H1 (cell line): ENCODE measurements at regions of chr5 and their contacts with region 1.

Region 1: DNA sequence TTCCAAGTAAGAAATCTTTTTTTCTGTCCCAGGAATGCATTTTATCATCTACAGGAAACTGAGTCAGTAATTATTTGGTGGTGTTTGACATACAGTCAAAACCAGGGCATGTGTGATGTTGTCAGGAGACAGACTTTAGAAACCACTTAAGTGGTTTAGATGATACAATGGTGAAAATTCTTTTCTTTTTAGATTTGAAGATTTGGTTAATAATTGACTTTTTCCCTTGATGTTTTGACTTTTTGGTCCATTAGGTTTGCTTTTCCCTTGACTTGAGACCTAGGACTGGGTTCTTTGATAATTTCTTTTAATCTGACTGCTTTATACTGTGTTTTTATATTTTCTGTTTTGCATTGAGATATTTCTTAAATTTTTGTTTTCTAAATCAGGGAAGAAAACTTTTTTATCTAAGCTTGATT is 85.2 kb downstream of the RASGRF2 start:
- DNase-seq: no peak
- H3K4me3 ChIP-seq: no peak overlapping the region
- H3K27ac ChIP-seq: no peak overlapping the region
- H3K4me1 ChIP-seq: peaks cover 0 to 2% (median 0%) of the 10 kb centered on the region in 4 experiments; a peak in 1 of 7 replicates
- H3K27me3 ChIP-seq: no peaks in the 10 kb centered on the region
- CTCF ChIP-seq: no peak
- EP300 ChIP-seq: no peak
- POLR2A ChIP-seq: no peak
- RAD21 ChIP-seq: no peak

Region 2: GRCh38 chr5:80960531-80961375 is 84.6 kb before region 1 on chr5:
- CTCF ChIA-PET with region 1: interaction called, 10 read pairs
- POLR2A ChIA-PET with region 1: no interaction called
- DNase-seq: peak in 1 of 2 experiments; percentile 75
- H3K4me3 ChIP-seq: peak overlapping the region; percentile 48 to 70 (median 64)
- H3K27ac ChIP-seq: no peak overlapping the region
- H3K4me1 ChIP-seq: peaks cover 16 to 31% (median 25%) of the 10 kb centered on the region in 4 experiments
- H3K27me3 ChIP-seq: peaks cover 3 to 25% (median 21%) of the 10 kb centered on the region in 4 experiments; a peak in 6 of 7 replicates
- CTCF ChIP-seq: peak in 1 of 3 experiments; percentile 3; a peak in 1 of 4 replicates
- EP300 ChIP-seq: no peak
- POLR2A ChIP-seq: no peak
- RAD21 ChIP-seq: peak; percentile 9 to 10; a peak in 1 of 4 replicates